Cardiac septum (tissue), 1 donor: ENCODE measurements at regions of chr16 and their contacts with region 1.

Region 1: DNA sequence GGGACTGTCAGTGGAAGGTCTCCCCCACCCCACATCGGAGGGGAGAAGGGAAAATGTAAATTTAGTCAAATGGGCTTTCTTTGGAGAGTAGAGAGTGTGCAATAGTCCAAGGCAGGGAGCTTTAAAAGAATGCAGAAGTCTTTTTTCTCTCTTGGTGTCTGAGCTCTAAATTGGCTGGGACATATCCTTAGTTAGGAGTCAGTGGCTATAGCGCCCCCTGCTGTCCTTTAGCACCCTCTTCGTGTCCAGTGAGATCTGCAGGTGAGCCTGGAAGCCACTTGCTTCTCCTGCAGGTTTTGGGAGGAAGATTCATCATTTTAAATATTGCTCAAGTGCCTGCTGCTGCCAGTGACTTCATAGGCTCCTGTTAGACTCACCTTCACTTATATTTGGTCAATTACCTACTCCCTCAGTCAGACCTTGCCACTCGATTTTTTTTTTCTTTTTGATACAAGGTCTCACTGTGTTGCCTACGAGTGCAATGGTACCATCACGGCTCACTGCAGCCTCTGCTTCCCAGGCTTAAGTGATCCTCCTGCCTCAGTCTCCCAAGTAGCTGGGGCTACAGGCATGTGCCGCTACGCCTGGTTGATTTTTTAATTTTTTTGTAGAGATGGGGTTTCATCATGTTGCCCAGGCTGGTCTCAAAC is 174.8 kb downstream of the PRKCB start:
- DNase-seq: no peak

Region 2: DNA sequence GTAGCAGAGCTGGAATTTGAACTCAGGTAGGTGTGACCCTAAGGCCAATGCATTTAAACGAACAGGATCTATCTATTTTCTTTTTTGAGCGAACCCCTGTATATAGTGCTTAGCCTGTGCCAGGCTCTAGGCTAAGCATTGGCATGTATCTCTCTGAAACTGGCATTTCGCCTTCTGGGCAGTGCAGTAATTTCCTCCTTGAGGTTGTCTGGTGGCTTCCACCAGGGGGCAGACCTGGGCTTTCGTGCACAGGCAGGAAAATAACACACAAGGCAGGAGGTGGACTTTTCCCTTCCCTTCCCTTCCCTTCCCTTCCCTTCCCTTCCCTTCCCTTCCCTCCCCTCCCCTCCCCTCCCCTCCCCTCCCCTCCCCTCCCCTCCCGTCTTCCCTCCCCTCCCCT is 209.2 kb before region 1 on chr16:
- intact Hi-C with region 1: loop called (anchors 2 kb)
- DNase-seq: peak; percentile 80